ENCODE measurements at regions of chr11 and their contacts with region 1.

Region 1: DNA sequence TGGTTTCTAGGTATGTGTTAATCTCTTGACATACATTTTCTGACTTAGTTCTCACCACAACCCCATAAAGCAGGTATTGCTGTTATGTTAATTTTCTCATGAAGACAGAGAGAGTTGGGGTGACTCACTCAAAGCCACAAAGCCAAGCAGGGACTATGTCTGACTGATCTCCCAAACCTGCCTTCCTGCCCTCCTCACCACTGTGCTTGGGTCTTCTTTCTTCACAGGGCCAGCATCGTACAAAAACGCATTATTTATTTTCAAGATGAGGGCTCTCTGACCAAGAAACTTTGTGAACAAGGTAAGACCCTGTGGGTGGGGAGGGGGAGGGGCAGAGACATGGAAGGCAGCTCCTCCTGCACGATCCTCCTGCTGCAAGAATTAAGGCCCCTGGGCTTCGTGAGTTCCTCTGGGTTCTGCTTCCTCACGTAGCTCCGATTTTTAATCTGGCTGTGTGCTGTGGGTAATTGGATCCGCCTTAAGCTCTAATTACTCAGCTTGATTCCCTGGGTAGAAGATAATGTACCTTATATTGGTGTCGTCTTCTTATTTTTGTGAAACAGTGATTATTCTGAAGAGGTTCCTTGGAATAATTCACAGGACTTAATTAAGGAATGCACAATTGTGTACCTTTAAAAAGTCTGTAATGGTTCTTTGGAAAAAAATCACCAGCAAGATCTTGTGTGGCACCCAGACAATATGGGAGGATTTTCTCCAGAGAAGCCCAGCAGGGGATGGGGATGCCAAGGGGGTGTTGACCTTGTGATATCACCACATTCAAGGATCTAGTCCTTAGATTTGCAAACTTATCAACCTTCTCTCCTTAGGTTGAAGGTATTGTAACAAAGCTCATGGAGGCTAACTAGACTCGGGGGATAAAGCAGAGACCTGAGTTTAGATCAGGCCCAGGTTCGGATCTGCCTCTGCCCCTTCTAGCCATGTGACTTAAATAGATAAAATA is 112.9 kb downstream of the SPON1 start:
- DNase-seq: peak; percentile 8 to 79 (median 67)
- ATAC-seq: peak; percentile 94
- H3K4me3 ChIP-seq: peak overlapping the region; percentile 39
- H3K4me3 Mint-ChIP-seq: peak overlapping the region; percentile 49 to 90 (median 74)
- H3K27ac ChIP-seq: peak overlapping the region; percentile 11
- H3K27ac Mint-ChIP-seq: peak overlapping the region; percentile 56 to 94 (median 88)
- H3K4me1 ChIP-seq: peaks cover 0 to 63% of the 10 kb centered on the region in 2 donors
- H3K4me1 Mint-ChIP-seq: peaks cover 43 to 74% (median 67%) of the 10 kb centered on the region in 7 donors
- H3K27me3 ChIP-seq: no peaks in the 10 kb centered on the region
- H3K27me3 Mint-ChIP-seq: peaks cover 0 to 21% (median 0%) of the 10 kb centered on the region in 5 donors

Region 2: DNA sequence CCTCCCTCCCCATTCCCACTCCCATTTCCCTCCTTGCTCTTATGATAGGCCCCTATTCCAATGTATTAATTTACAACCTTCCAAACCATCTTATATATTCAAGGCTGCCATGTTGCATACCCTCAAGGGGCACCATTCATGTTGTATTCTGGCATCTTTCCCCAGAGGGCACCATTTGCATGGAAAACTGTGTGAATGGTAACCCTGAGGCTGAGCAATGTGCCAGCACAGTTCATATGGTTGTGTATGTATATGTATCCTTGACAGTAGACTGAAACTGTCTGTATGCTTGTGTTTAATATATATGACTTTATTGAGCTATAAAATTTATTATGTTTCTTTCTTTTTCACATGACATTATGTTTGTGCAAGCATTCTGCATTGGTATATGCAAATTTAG is 1059.0 kb before region 1 on chr11:
- CTCF ChIA-PET with region 1: no interaction called
- POLR2A ChIA-PET with region 1: no interaction called
- intact Hi-C with region 1: no loop called
- DNase-seq: no peak
- ATAC-seq: no peak
- H3K4me3 ChIP-seq: no peak overlapping the region
- H3K4me3 Mint-ChIP-seq: no peak overlapping the region
- H3K27ac ChIP-seq: no peak overlapping the region
- H3K27ac Mint-ChIP-seq: no peak overlapping the region
- H3K4me1 ChIP-seq: no peaks in the 10 kb centered on the region
- H3K4me1 Mint-ChIP-seq: peaks cover 0 to 5% (median 0%) of the 10 kb centered on the region in 7 donors
- H3K27me3 ChIP-seq: peaks cover 0 to 6% of the 10 kb centered on the region in 2 donors
- H3K27me3 Mint-ChIP-seq: peaks cover 27 to 53% (median 43%) of the 10 kb centered on the region in 5 donors

Region 3: GRCh38 chr11:13861411-13861810 is 214.0 kb before region 1 on chr11:
- CTCF ChIA-PET with region 1: no interaction called
- POLR2A ChIA-PET with region 1: no interaction called
- intact Hi-C with region 1: loop called (anchors 2 to 5 kb)
- DNase-seq: peak in 4 of 9 donors; percentile 11 to 19 (median 14)
- ATAC-seq: no peak
- H3K4me3 ChIP-seq: no peak overlapping the region
- H3K4me3 Mint-ChIP-seq: peak overlapping the region in 7 of 10 donors; percentile 6 to 66 (median 55)
- H3K27ac ChIP-seq: no peak overlapping the region
- H3K27ac Mint-ChIP-seq: peak overlapping the region in 8 of 9 donors; percentile 33 to 98 (median 71)
- H3K4me1 ChIP-seq: peaks cover 6 to 19% of the 10 kb centered on the region in 2 donors
- H3K4me1 Mint-ChIP-seq: peaks cover 20 to 33% (median 25%) of the 10 kb centered on the region in 7 donors
- H3K27me3 ChIP-seq: no peaks in the 10 kb centered on the region
- H3K27me3 Mint-ChIP-seq: no peaks in the 10 kb centered on the region

Region 4: DNA sequence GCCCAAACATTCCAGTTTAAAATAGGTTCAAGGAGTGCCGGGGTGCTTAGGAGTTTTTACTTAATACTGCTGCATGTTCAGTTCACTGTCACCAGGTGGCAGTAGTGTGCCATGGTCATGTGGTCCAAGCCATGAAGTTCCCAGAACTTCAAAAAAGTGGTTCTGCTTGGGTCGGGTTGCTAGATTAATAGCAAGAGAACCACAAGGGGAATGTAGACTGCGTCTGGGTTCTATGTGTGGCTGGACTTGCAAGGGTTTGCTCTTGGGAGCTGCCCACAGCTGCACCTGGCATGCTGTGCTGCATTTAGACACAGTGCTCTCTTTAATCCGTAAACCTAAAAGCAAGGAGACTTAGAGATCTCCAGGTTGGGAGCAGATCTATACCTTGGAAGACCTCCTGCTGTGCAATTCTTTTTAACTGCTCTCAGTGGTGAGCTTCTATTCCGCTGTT is 119.4 kb before region 1 on chr11:
- CTCF ChIA-PET with region 1: interaction called, 12 read pairs
- POLR2A ChIA-PET with region 1: interaction called, 6 read pairs
- intact Hi-C with region 1: loop called in 1 of 2 experiments (anchors 5 kb)
- DNase-seq: peak in 8 of 9 donors; percentile 39 to 75 (median 56)
- ATAC-seq: peak; percentile 91
- H3K4me3 ChIP-seq: no peak overlapping the region
- H3K4me3 Mint-ChIP-seq: no peak overlapping the region
- H3K27ac ChIP-seq: no peak overlapping the region
- H3K27ac Mint-ChIP-seq: no peak overlapping the region
- H3K4me1 ChIP-seq: no peaks in the 10 kb centered on the region
- H3K4me1 Mint-ChIP-seq: peaks cover 0 to 2% (median 0%) of the 10 kb centered on the region in 7 donors
- H3K27me3 ChIP-seq: no peaks in the 10 kb centered on the region
- H3K27me3 Mint-ChIP-seq: peaks cover 18 to 55% (median 22%) of the 10 kb centered on the region in 5 donors

Region 5: DNA sequence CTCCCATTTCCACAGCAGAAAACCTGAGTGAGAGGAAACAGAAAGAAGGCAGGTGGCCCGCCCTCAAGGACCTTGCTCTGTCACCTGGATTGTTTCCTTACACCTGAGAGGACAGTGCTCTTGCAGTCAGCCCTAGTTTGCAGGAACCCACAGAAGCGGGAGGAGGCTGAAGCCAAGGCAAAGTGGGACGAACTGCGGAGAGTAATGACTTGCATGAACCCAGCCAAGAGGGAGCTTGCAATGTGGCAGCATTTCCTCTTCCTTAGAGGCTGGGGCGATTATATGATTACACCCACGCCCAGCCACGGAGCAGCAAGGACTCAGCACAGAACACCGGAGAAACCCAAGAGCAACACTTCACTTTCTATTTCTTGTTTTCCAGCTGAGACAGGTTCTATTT is 10.3 kb before region 1 on chr11:
- CTCF ChIA-PET with region 1: interaction called, 3 read pairs
- POLR2A ChIA-PET with region 1: interaction called, 5 read pairs
- intact Hi-C with region 1: loop called in 1 of 2 experiments (anchors 1 kb)
- DNase-seq: peak in 3 of 9 donors; percentile 8 to 29 (median 26)
- ATAC-seq: no peak
- H3K4me3 ChIP-seq: peak overlapping the region; percentile 31
- H3K4me3 Mint-ChIP-seq: peak overlapping the region; percentile 23 to 86 (median 70)
- H3K27ac ChIP-seq: no peak overlapping the region
- H3K27ac Mint-ChIP-seq: peak overlapping the region in 6 of 9 donors; percentile 1 to 87 (median 36)
- H3K4me1 ChIP-seq: no peaks in the 10 kb centered on the region
- H3K4me1 Mint-ChIP-seq: peaks cover 8 to 32% (median 20%) of the 10 kb centered on the region in 7 donors
- H3K27me3 ChIP-seq: no peaks in the 10 kb centered on the region
- H3K27me3 Mint-ChIP-seq: peaks cover 0 to 10% (median 0%) of the 10 kb centered on the region in 5 donors

Region 6: DNA sequence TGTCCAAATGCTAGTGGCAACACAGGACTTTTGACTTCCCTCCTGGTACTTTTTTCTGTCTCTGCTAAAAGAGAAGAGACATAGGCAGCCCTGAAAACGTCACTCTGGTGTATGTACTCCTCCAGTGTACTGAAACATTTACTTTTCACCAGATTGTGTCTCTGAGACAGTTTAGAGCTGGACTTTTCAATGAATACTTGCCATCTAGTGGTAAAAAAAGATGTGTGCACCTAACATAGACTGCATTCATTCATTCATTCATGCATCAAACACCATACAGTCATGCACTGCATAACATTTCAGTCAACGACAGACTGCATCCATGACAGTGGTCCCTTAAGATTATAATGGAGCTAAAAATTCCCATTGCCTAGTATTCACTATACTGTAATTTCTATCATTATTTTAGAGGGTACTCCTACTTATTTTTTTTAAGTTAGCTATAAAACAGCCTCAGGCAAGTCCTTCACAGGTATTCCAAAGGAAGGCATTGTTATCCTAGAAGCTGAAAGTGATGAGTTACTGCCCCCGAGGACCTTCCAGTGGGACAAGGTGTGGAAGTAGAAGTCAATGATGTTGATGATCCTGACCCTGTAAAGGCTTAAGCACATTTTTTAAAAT is 73.4 kb after region 1 on chr11:
- CTCF ChIA-PET with region 1: interaction called, 9 read pairs
- POLR2A ChIA-PET with region 1: no interaction called
- intact Hi-C with region 1: loop called in 1 of 2 experiments (anchors 2 kb)
- DNase-seq: peak in 7 of 9 donors; percentile 26 to 66 (median 46)
- ATAC-seq: peak; percentile 75
- H3K4me3 ChIP-seq: no peak overlapping the region
- H3K4me3 Mint-ChIP-seq: no peak overlapping the region
- H3K27ac ChIP-seq: no peak overlapping the region
- H3K27ac Mint-ChIP-seq: peak overlapping the region in 1 of 9 donors; percentile 74
- H3K4me1 ChIP-seq: no peaks in the 10 kb centered on the region
- H3K4me1 Mint-ChIP-seq: peaks cover 0 to 5% (median 4%) of the 10 kb centered on the region in 7 donors
- H3K27me3 ChIP-seq: no peaks in the 10 kb centered on the region
- H3K27me3 Mint-ChIP-seq: peaks cover 0 to 20% (median 0%) of the 10 kb centered on the region in 5 donors